Activated naive CD4-positive, alpha-beta T cell treated with anti-CD3 and anti-CD28 coated beads for 36 hours (primary cell): ENCODE measurements at regions of chr7 and their contacts with region 1.

Region 1: DNA sequence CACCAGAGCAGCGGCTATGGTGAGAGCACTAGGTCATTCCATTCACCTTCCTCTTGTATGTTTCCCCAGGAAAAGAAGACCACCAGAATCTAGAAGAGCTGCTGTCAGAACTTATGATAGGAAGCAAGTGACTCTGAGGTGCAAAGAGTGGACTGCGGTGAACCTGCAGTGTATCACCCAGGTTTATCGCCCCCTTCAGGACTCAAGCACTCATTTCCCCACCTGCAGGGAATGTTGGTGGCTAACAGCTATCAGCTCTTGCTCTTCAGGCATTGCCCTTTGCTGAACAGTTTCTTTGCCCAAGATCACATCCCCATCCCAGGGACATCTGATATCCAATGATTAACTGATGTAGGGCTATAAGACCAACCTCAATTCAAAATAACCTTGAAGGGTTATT is 66.3 kb upstream of the IL6 start:
- DNase-seq: peak; percentile 28
- H3K4me3 Mint-ChIP-seq: no peak overlapping the region
- H3K27ac Mint-ChIP-seq: no peak overlapping the region
- H3K4me1 Mint-ChIP-seq: peaks cover 36% of the 10 kb centered on the region
- H3K27me3 Mint-ChIP-seq: no peaks in the 10 kb centered on the region

Region 2: GRCh38 chr7:22361795-22362194 is 298.9 kb before region 1 on chr7:
- CTCF ChIA-PET with region 1: no interaction called
- intact Hi-C with region 1: no loop called
- DNase-seq: no peak
- H3K4me3 Mint-ChIP-seq: no peak overlapping the region
- H3K27ac Mint-ChIP-seq: no peak overlapping the region
- H3K4me1 Mint-ChIP-seq: peaks cover 3% of the 10 kb centered on the region
- H3K27me3 Mint-ChIP-seq: peaks cover 27% of the 10 kb centered on the region

Region 3: DNA sequence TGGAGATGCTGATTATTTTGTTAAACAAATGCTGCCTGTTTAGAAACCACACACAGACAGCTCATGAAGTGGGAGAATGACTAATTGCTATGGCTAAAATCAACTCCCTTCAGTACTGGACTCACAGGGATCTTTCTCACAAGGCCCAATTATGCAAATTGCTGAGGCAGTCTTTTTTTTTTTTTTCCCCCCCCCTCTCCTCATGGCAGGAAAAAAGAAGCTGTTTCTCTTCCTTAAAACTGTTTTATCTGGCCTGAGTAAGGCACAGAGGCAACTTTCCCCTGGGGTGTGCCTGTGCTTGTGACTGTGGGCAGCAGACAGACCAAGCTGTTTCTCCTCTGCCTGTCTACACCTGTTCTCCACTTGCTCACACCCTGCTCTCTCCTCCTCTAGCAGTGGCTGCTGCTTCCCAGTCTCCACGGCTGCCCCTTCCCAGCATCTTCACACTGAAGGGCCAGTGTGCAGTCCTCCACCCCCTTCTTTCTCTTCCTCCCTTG is 95.4 kb before region 1 on chr7:
- CTCF ChIA-PET with region 1: interaction called, 8 read pairs
- intact Hi-C with region 1: loop called (anchors 1 kb)
- DNase-seq: no peak
- H3K4me3 Mint-ChIP-seq: no peak overlapping the region
- H3K27ac Mint-ChIP-seq: no peak overlapping the region
- H3K4me1 Mint-ChIP-seq: peaks cover 45% of the 10 kb centered on the region
- H3K27me3 Mint-ChIP-seq: peaks cover 29% of the 10 kb centered on the region

Region 4: GRCh38 chr7:22640269-22640668 is 20.5 kb before region 1 on chr7:
- CTCF ChIA-PET with region 1: interaction called, 3 read pairs
- intact Hi-C with region 1: loop called (anchors 1 kb)
- DNase-seq: peak; percentile 75
- H3K4me3 Mint-ChIP-seq: no peak overlapping the region
- H3K27ac Mint-ChIP-seq: peak overlapping the region; percentile 41
- H3K4me1 Mint-ChIP-seq: peaks cover 23% of the 10 kb centered on the region
- H3K27me3 Mint-ChIP-seq: peaks cover 8% of the 10 kb centered on the region

Region 5: DNA sequence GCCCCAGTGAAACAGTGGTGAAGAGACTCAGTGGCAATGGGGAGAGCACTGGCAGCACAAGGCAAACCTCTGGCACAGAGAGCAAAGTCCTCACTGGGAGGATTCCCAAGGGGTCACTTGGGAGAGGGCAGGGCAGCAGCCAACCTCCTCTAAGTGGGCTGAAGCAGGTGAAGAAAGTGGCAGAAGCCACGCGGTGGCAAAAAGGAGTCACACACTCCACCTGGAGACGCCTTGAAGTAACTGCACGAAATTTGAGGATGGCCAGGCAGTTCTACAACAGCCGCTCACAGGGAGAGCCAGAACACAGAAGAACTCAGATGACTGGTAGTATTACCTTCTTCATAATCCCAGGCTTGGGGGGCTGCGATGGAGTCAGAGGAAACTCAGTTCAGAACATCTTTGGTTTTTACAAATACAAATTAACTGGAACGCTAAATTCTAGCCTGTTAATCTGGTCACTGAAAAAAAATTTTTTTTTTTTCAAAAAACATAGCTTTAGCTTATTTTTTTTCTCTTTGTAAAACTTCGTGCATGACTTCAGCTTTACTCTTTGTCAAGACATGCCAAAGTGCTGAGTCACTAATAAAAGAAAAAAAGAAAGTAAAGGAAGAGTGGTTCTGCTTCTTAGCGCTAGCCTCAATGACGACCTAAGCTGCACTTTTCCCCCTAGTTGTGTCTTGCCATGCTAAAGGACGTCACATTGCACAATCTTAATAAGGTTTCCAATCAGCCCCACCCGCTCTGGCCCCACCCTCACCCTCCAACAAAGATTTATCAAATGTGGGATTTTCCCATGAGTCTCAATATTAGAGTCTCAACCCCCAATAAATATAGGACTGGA is 65.8 kb after region 1 on chr7:
- CTCF ChIA-PET with region 1: interaction called, 22 read pairs
- intact Hi-C with region 1: loop called (anchors 1 kb)
- DNase-seq: peak; percentile 76
- H3K4me3 Mint-ChIP-seq: peak overlapping the region; percentile 70
- H3K27ac Mint-ChIP-seq: peak overlapping the region; percentile 89
- H3K4me1 Mint-ChIP-seq: peaks cover 30% of the 10 kb centered on the region
- H3K27me3 Mint-ChIP-seq: peaks cover 24% of the 10 kb centered on the region

Region 6: GRCh38 chr7:23020742-23021401 is 360.1 kb after region 1 on chr7:
- CTCF ChIA-PET with region 1: no interaction called
- intact Hi-C with region 1: loop called (anchors 1 kb)
- DNase-seq: peak; percentile 43
- H3K4me3 Mint-ChIP-seq: no peak overlapping the region
- H3K27ac Mint-ChIP-seq: peak overlapping the region; percentile 72
- H3K4me1 Mint-ChIP-seq: peaks cover 25% of the 10 kb centered on the region
- H3K27me3 Mint-ChIP-seq: peaks cover 9% of the 10 kb centered on the region